ENCODE measurements at regions of chr10 and their contacts with region 1.

Region 1: GRCh38 chr10:95374597-95375209 is 83.9 kb upstream of the PDLIM1 start:
- DNase-seq: peak; percentile 60 to 73
- ATAC-seq: peak; percentile 88 to 95
- H3K4me3 ChIP-seq: no peak overlapping the region
- H3K27ac ChIP-seq: peak overlapping the region in 2 of 4 donors; percentile 4 to 7
- H3K4me1 ChIP-seq: peaks cover 6 to 14% of the 10 kb centered on the region in 2 donors
- H3K27me3 ChIP-seq: no peaks in the 10 kb centered on the region
- CTCF ChIP-seq: peak; percentile 83 to 93 (median 85)
- POLR2A ChIP-seq: no peak

Region 2: GRCh38 chr10:95133016-95133752 is 241.5 kb before region 1 on chr10:
- in situ Hi-C with region 1: loop called in 1 of 4 experiments (anchors 25 kb)
- intact Hi-C with region 1: no loop called
- DNase-seq: peak; percentile 5 to 61
- ATAC-seq: peak in 1 of 2 donors; percentile 87
- H3K4me3 ChIP-seq: no peak overlapping the region
- H3K27ac ChIP-seq: no peak overlapping the region
- H3K4me1 ChIP-seq: no peaks in the 10 kb centered on the region
- H3K27me3 ChIP-seq: no peaks in the 10 kb centered on the region
- CTCF ChIP-seq: peak; percentile 48 to 70 (median 62)
- POLR2A ChIP-seq: no peak

Region 3: DNA sequence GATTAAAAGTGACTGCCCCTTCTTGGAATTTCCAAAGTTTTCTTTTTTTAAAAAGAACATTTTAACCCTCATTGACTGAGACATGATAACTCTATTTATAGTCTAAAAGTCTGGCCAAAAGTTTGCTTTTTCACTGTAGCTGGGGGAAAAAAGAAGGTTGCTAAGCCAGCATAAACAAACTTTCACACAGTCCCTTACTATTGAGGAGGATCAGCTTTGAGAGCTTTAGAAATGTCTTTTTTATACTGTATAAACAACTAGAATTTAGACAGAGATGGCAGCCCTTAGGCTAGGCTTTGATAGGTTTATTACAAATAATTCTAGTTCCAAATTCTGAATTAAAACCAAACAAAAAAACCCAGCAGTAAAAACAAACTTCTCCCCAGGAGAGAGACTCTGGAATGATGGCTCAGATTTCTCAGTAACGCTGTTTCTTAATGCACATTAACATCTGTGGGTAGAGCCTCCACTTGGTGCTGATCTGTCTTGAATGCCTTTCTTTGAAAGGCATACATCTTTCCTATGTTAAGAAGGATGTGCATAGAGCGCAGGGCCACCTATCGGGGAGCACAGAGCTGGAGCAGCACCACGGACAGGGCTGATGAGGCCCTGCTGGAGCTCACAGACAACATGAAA is 17.0 kb after region 1 on chr10:
- in situ Hi-C with region 1: no loop called
- intact Hi-C with region 1: loop called (anchors 2 kb)
- DNase-seq: no peak
- ATAC-seq: no peak
- H3K4me3 ChIP-seq: no peak overlapping the region
- H3K27ac ChIP-seq: peak overlapping the region; percentile 91 to 98 (median 97)
- H3K4me1 ChIP-seq: peaks cover 31% of the 10 kb centered on the region in 2 donors
- H3K27me3 ChIP-seq: no peaks in the 10 kb centered on the region
- CTCF ChIP-seq: no peak
- POLR2A ChIP-seq: no peak

Region 4: GRCh38 chr10:95430231-95430951 is 55.7 kb after region 1 on chr10:
- in situ Hi-C with region 1: loop called in 2 of 4 experiments (anchors 10 kb)
- intact Hi-C with region 1: loop called (anchors 5 kb)
- DNase-seq: peak; percentile 46 to 58
- ATAC-seq: peak; percentile 85 to 91
- H3K4me3 ChIP-seq: no peak overlapping the region
- H3K27ac ChIP-seq: peak overlapping the region; percentile 57 to 73 (median 66)
- H3K4me1 ChIP-seq: peaks cover 23 to 43% of the 10 kb centered on the region in 2 donors
- H3K27me3 ChIP-seq: no peaks in the 10 kb centered on the region
- CTCF ChIP-seq: peak; percentile 93 to 99 (median 95)
- POLR2A ChIP-seq: no peak

Region 5: GRCh38 chr10:95601116-95601719 is 226.5 kb after region 1 on chr10:
- in situ Hi-C with region 1: loop called in 3 of 4 experiments (anchors 5 to 10 kb)
- intact Hi-C with region 1: loop called (anchors 1 kb)
- DNase-seq: peak; percentile 70 to 81
- ATAC-seq: peak; percentile 96 to 99
- H3K4me3 ChIP-seq: no peak overlapping the region
- H3K27ac ChIP-seq: peak overlapping the region in 2 of 4 donors; percentile 21 to 42
- H3K4me1 ChIP-seq: peaks cover 10 to 16% of the 10 kb centered on the region in 2 donors
- H3K27me3 ChIP-seq: no peaks in the 10 kb centered on the region
- CTCF ChIP-seq: peak; percentile 89 to 96 (median 90)
- POLR2A ChIP-seq: no peak

Region 6: DNA sequence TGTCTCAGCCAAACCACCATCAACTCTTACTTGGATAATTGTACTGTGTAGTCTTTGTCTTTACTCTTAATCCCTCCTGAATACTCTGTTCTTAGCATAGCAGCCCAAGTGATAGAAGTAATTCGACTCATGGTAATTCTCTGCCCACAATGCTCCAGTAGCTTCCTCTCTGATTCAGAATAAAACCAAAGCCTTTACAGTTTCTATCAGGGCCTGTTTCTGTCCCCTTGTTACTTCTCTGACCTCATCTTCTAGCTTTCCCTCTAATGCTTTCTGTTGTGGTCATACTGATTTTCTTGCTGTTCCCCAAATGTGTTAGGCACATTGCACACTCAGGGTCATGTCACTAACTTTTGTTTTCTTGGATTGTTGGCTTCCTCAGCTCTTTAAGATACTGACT is 763.4 kb after region 1 on chr10:
- in situ Hi-C with region 1: no loop called
- intact Hi-C with region 1: no loop called
- DNase-seq: no peak
- ATAC-seq: no peak
- H3K4me3 ChIP-seq: no peak overlapping the region
- H3K27ac ChIP-seq: no peak overlapping the region
- H3K4me1 ChIP-seq: no peaks in the 10 kb centered on the region
- H3K27me3 ChIP-seq: no peaks in the 10 kb centered on the region
- CTCF ChIP-seq: no peak
- POLR2A ChIP-seq: no peak

Measured in gastrocnemius medialis (tissue), 4 donors.